Left ventricle myocardium superior (tissue), 1 donor: ENCODE measurements at regions of chr5 and their contacts with region 1.

Region 1: DNA sequence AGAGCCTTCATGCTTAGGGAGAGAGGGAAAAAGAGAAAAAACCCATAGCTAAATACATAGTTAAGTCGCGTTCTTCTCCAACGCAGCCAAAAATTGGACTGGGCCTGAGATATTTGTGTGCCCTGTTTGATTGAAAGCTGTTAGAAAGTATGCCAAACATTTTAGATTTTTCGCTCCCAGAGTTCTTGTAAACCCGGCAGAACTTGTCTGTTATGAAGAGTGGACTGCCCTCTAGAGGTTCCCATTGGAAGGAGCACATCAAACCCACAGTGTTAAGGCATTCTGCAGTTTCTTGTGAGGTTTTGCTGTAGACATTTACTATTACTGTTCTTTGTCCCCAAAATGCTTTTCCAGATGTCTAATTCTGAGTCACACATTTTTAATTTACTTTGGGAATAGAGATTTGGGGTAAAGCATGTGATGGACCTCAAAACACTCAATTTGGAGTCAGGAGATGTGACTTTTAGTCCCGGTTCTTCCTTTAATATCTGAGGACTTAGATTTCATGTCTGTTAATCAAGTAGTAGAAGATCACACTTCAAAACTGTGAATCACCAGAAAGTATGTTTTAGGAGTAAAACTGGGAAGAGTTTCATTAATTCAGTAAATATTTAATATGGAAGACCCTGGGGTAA is 96.6 kb downstream of the PCSK1 start:
- DNase-seq: no peak
- ATAC-seq: peak; percentile 74

Region 2: GRCh38 chr5:95858661-95859326 is 477.7 kb before region 1 on chr5:
- intact Hi-C with region 1: loop called (anchors 5 kb)
- DNase-seq: peak; percentile 92
- ATAC-seq: peak; percentile 73

Region 3: GRCh38 chr5:96113170-96113939 is 223.1 kb before region 1 on chr5:
- intact Hi-C with region 1: no loop called
- DNase-seq: peak; percentile 40
- ATAC-seq: peak; percentile 90

Region 4: GRCh38 chr5:96584712-96585111 is 248.2 kb after region 1 on chr5:
- intact Hi-C with region 1: no loop called
- DNase-seq: no peak
- ATAC-seq: peak; percentile 23